Caco-2 (cell line): ENCODE measurements at regions of chr6 and their contacts with region 1.

Region 1: GRCh38 chr6:32838114-32838958 is at the start of gene TAP2:
- DNase-seq: peak; percentile 89 to 97
- H3K4me3 ChIP-seq: peak within 1 kb of the TSS; percentile 69
- H3K4me3 Mint-ChIP-seq: peak within 1 kb of the TSS; percentile 72
- H3K27ac Mint-ChIP-seq: no peak within 1 kb of the TSS
- H3K4me1 ChIP-seq: peaks cover 5% of the 10 kb centered on the region
- H3K4me1 Mint-ChIP-seq: peaks cover 8% of the 10 kb centered on the region
- H3K27me3 ChIP-seq: no peaks in the 10 kb centered on the region; the same call in 1 of the 2 replicates
- H3K27me3 Mint-ChIP-seq: no peaks in the 10 kb centered on the region
- CTCF ChIP-seq: peak; percentile 85 to 86
- total RNA-seq, gene TAP2: 10.3 and 11.9 TPM in 2 replicates

Region 2: DNA sequence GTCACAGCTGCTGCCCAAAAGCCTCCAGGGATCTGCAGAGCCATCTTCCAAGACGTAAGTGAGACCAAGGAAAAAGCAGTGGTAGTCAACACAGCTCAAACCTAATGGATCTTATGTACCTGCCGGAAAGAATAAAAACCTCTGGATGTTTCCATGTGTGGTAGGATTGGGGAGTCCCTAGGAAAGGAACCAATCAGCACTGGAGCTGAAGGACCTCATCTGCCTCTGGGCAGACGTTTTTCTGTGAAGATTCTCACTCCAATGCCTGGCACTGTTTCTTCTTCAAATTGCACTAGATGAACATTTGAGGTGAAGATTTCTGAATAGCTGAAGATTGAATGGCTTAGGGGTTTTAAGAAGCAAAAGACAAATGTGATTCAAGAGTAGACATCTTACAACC is 74.9 kb before region 1 on chr6 and contains the start of gene HLA-DQB2:
- CTCF ChIA-PET with region 1: no interaction called
- POLR2A ChIA-PET with region 1: no interaction called
- intact Hi-C with region 1: no loop called
- DNase-seq: no peak
- H3K4me3 ChIP-seq: no peak within 1 kb of the TSS
- H3K4me3 Mint-ChIP-seq: no peak within 1 kb of the TSS
- H3K27ac Mint-ChIP-seq: no peak within 1 kb of the TSS
- H3K4me1 ChIP-seq: no peaks in the 10 kb centered on the region
- H3K4me1 Mint-ChIP-seq: no peaks in the 10 kb centered on the region
- H3K27me3 ChIP-seq: no peaks in the 10 kb centered on the region; the same call in 1 of the 2 replicates
- H3K27me3 Mint-ChIP-seq: peaks cover 14% of the 10 kb centered on the region
- CTCF ChIP-seq: no peak
- total RNA-seq, gene HLA-DQB2: not detected in 2 replicates

Region 3: DNA sequence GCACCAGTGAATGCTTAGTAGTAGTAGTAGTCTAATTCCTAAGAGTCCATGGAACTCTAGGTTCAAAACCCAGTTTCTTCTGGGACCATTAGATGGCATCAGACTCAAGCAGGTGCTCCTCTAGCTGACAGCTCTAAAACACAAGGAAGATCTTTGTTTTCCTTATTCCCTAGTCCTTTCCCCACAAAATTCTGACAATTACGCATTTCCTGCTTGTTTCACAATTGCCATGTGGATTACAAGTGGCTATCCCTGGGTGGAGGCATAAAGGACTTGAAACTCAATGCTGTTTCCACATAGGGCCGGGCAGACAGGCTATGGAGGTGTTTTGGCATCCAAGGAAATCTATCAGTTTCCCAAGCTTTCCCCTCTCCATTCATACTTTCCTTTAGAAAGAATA is 12.4 kb before region 1 on chr6:
- CTCF ChIA-PET with region 1: interaction called, 13 read pairs
- POLR2A ChIA-PET with region 1: no interaction called
- intact Hi-C with region 1: no loop called
- DNase-seq: peak in 1 of 2 experiments; percentile 19
- H3K4me3 ChIP-seq: no peak overlapping the region
- H3K4me3 Mint-ChIP-seq: no peak overlapping the region
- H3K27ac Mint-ChIP-seq: no peak overlapping the region
- H3K4me1 ChIP-seq: no peaks in the 10 kb centered on the region
- H3K4me1 Mint-ChIP-seq: no peaks in the 10 kb centered on the region
- H3K27me3 ChIP-seq: no peaks in the 10 kb centered on the region; the same call in 1 of the 2 replicates
- H3K27me3 Mint-ChIP-seq: peaks cover 3% of the 10 kb centered on the region
- CTCF ChIP-seq: peak; percentile 46 to 59

Region 4: GRCh38 chr6:32853541-32854375 is 15.4 kb after region 1 on chr6 and contains the starts of genes PSMB9 and TAP1:
- CTCF ChIA-PET with region 1: interaction called, 79 read pairs
- POLR2A ChIA-PET with region 1: interaction called, 8 read pairs
- intact Hi-C with region 1: loop called (anchors 1 kb)
- DNase-seq: peak; percentile 84 to 90
- H3K4me3 ChIP-seq: peak within 1 kb of the TSS; percentile 46
- H3K4me3 Mint-ChIP-seq: peak within 1 kb of the TSS; percentile 88
- H3K27ac Mint-ChIP-seq: peak within 1 kb of the TSS; percentile 73
- H3K4me1 ChIP-seq: peaks cover 6% of the 10 kb centered on the region; the same call in 1 of the 2 replicates
- H3K4me1 Mint-ChIP-seq: peaks cover 16% of the 10 kb centered on the region
- H3K27me3 ChIP-seq: peaks cover 1% of the 10 kb centered on the region
- H3K27me3 Mint-ChIP-seq: peaks cover 26% of the 10 kb centered on the region
- CTCF ChIP-seq: peak; percentile 65 to 85
- total RNA-seq, gene PSMB9: 1.3 TPM in 1 of 2 replicates, not detected in the other
- total RNA-seq, gene TAP1: 2.4 and 3.7 TPM in 2 replicates

Region 5: GRCh38 chr6:32868257-32868788 is 30.0 kb after region 1 on chr6:
- CTCF ChIA-PET with region 1: interaction called, 121 read pairs
- POLR2A ChIA-PET with region 1: interaction called, 4 read pairs
- intact Hi-C with region 1: loop called (anchors 1 kb)
- DNase-seq: peak; percentile 61 to 73
- H3K4me3 ChIP-seq: no peak overlapping the region
- H3K4me3 Mint-ChIP-seq: no peak overlapping the region
- H3K27ac Mint-ChIP-seq: no peak overlapping the region
- H3K4me1 ChIP-seq: peaks cover 9% of the 10 kb centered on the region; the same call in 1 of the 2 replicates
- H3K4me1 Mint-ChIP-seq: no peaks in the 10 kb centered on the region
- H3K27me3 ChIP-seq: no peaks in the 10 kb centered on the region; the same call in 1 of the 2 replicates
- H3K27me3 Mint-ChIP-seq: peaks cover 15% of the 10 kb centered on the region
- CTCF ChIP-seq: peak; percentile 78 to 83

Region 6: GRCh38 chr6:32894080-32895005 is 56.0 kb after region 1 on chr6:
- CTCF ChIA-PET with region 1: interaction called, 10 read pairs
- POLR2A ChIA-PET with region 1: interaction called, 3 read pairs
- intact Hi-C with region 1: no loop called
- DNase-seq: peak; percentile 93 to 96
- H3K4me3 ChIP-seq: peak overlapping the region; percentile 68
- H3K4me3 Mint-ChIP-seq: peak overlapping the region; percentile 99
- H3K27ac Mint-ChIP-seq: peak overlapping the region; percentile 96
- H3K4me1 ChIP-seq: no peaks in the 10 kb centered on the region
- H3K4me1 Mint-ChIP-seq: peaks cover 7% of the 10 kb centered on the region
- H3K27me3 ChIP-seq: no peaks in the 10 kb centered on the region
- H3K27me3 Mint-ChIP-seq: peaks cover 4% of the 10 kb centered on the region
- CTCF ChIP-seq: no peak

Region 7: DNA sequence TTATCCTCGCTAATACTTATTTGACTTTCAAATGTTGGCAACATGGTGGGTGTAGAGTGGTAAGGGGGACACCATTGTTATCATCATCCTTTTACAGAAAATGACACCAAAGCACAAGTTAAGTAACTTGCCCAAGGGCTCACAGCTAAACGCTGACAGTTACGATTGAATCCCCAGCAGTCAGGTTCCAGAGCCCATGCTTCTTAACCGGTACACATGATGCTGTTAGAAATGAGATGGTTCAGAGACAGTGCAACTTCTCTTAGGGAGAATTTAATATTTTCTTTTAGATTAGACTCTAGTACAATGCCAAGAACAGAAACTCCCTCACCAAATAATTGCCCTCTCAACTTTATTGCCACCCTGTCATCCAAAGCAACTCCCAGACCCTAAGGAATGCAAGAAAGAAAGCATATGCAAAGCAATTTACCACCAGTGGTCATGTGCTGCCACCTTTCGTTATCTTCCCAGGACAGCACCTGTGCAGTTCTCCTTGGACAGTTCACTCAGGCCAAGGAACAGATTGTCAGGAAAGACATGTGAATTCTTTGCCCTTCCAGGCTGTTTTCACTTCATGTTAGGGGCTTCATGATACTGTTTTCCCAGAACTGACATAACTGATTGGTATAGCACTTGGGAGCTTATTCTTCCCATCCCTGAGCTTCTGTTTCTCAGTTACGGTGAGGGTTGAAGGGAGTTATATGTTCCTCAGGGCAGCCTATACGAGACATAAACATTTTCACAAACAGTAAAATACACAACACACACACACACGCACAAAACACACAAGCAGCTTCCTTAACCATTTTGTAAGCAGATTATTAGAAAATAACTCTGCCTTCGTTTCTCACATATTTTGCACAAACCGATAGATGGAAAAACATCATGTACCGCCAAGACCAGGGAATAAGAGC is 109.5 kb after region 1 on chr6:
- CTCF ChIA-PET with region 1: interaction called, 5 read pairs
- POLR2A ChIA-PET with region 1: no interaction called
- intact Hi-C with region 1: loop called (anchors 5 kb)
- DNase-seq: peak; percentile 62 to 73
- H3K4me3 ChIP-seq: no peak overlapping the region
- H3K4me3 Mint-ChIP-seq: no peak overlapping the region
- H3K27ac Mint-ChIP-seq: no peak overlapping the region
- H3K4me1 ChIP-seq: no peaks in the 10 kb centered on the region
- H3K4me1 Mint-ChIP-seq: no peaks in the 10 kb centered on the region
- H3K27me3 ChIP-seq: no peaks in the 10 kb centered on the region
- H3K27me3 Mint-ChIP-seq: peaks cover 7% of the 10 kb centered on the region
- CTCF ChIP-seq: peak; percentile 69 to 78

Region 8: GRCh38 chr6:32964776-32965175 is 126.4 kb after region 1 on chr6:
- CTCF ChIA-PET with region 1: no interaction called
- POLR2A ChIA-PET with region 1: no interaction called
- intact Hi-C with region 1: no loop called
- DNase-seq: no peak
- H3K4me3 ChIP-seq: no peak overlapping the region
- H3K4me3 Mint-ChIP-seq: no peak overlapping the region
- H3K27ac Mint-ChIP-seq: no peak overlapping the region
- H3K4me1 ChIP-seq: no peaks in the 10 kb centered on the region
- H3K4me1 Mint-ChIP-seq: peaks cover 21% of the 10 kb centered on the region
- H3K27me3 ChIP-seq: no peaks in the 10 kb centered on the region
- H3K27me3 Mint-ChIP-seq: no peaks in the 10 kb centered on the region
- CTCF ChIP-seq: no peak

Region 9: DNA sequence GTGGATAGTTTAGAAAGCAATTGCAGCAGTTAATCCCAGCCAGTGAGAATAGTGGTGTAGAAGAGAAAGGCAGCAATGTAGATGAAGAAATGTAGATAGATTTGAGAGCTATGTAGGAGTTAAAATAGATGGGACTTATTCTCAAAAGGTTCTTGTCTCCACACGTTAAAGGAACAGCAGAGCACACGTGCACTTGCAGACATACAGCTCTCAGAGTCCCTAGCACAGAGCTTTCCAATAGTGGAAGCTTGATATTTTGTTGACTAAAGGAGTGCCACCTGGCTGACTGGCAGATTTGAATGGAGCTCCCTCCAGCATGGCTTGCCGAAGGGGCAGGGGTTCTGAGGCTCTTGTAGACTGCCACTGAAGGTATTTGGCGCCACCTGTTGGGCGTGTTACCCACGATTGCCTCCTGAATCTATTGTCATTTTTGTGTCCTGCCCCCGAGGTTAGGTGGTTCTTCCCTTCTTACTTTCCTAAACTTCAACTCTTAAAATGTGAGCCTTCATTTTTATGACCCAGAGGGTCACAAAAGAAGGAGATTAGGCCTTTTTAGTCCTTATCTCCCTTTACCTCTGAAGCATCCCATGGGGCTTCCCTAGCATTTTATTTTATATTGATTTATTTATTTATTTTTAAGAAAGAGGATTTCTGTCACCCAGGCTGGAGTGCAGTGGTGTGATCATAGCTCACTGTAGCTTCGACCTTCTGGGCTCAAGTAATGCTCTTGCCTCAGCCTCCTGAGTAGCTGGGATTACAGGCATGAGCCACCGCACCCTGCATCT is 146.5 kb after region 1 on chr6:
- CTCF ChIA-PET with region 1: interaction called, 18 read pairs
- POLR2A ChIA-PET with region 1: no interaction called
- intact Hi-C with region 1: no loop called
- DNase-seq: peak; percentile 84 to 86
- H3K4me3 ChIP-seq: no peak overlapping the region
- H3K4me3 Mint-ChIP-seq: peak overlapping the region; percentile 8
- H3K27ac Mint-ChIP-seq: no peak overlapping the region
- H3K4me1 ChIP-seq: peaks cover 17% of the 10 kb centered on the region
- H3K4me1 Mint-ChIP-seq: peaks cover 13% of the 10 kb centered on the region
- H3K27me3 ChIP-seq: no peaks in the 10 kb centered on the region
- H3K27me3 Mint-ChIP-seq: no peaks in the 10 kb centered on the region
- CTCF ChIP-seq: peak; percentile 73 to 81